ENCODE measurements at regions of chr3 and their contacts with region 1.

Region 1: DNA sequence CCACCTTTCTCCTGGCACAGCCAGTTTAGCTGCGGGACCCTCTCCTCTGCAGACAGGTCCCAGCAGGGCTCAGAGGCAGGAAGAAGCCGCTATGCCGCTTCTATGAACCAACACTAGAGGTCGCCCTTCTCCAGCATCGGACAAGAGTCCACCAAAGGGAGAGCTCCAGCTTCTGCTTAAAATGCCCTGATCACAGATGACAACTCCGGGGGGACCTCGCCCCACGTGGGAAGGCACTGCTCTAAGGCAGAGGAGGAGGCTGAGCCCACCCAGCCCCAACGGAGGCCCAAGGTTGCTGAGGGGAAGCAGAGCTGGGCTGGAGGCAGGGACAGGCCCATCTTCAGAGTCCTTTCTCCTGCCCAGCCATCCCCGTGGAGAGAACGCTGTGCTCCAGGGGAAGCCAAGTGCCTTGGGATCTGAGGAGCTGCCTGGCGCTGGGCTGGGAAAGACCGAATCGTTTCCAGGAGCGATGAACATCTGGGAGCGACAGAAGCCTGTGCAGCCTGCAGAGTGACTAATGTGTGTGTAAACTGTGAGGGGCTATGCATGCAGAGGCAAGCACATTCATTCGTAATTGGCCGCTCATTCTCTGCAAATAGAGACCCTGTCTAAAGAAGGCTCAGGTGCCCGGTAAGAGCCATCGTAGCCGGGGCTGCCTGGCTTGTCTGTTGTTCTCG is 43.5 kb upstream of the BDH1 start:
- H3K4me3 Mint-ChIP-seq: no peak overlapping the region
- H3K27ac Mint-ChIP-seq: no peak overlapping the region
- H3K4me1 Mint-ChIP-seq: peaks cover 10% of the 10 kb centered on the region
- H3K27me3 Mint-ChIP-seq: peaks cover 2% of the 10 kb centered on the region

Region 2: GRCh38 chr3:197428117-197428801 is 171.0 kb before region 1 on chr3:
- intact Hi-C with region 1: no loop called
- H3K4me3 Mint-ChIP-seq: no peak overlapping the region
- H3K27ac Mint-ChIP-seq: no peak overlapping the region
- H3K4me1 Mint-ChIP-seq: peaks cover 14% of the 10 kb centered on the region
- H3K27me3 Mint-ChIP-seq: peaks cover 48% of the 10 kb centered on the region

Region 3: DNA sequence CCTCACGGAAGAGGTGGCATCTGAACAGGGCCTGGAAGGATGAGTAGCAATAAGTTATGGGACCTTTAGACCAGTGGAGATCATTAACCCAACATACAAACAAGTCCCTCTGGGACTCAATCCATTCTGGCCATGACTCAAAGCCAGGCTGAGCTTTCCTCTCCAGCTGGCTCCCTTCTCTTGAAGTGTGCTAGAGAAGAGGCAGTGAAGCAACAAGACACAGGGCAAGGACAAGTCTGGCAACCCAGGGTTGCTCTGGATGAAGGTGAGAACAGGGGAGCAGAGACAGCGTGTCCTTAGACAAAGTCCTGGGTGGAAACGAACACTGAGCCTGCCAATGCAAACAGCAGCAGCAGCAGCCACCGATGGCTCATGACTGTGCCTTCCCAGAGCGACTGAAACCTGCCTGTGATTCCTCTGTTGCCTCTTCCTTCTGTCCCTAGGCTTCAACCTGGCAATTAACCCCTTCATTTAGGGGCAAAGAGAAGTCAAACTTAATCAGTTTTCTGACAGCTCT is 130.3 kb before region 1 on chr3:
- intact Hi-C with region 1: no loop called
- H3K4me3 Mint-ChIP-seq: no peak overlapping the region
- H3K27ac Mint-ChIP-seq: no peak overlapping the region
- H3K4me1 Mint-ChIP-seq: no peaks in the 10 kb centered on the region
- H3K27me3 Mint-ChIP-seq: peaks cover 43% of the 10 kb centered on the region

Region 4: GRCh38 chr3:197674741-197675562 is 75.7 kb after region 1 on chr3:
- intact Hi-C with region 1: loop called (anchors 5 kb)
- H3K4me3 Mint-ChIP-seq: no peak overlapping the region
- H3K27ac Mint-ChIP-seq: peak overlapping the region; percentile 40
- H3K4me1 Mint-ChIP-seq: peaks cover 44% of the 10 kb centered on the region
- H3K27me3 Mint-ChIP-seq: no peaks in the 10 kb centered on the region

Region 5: GRCh38 chr3:197874653-197875052 is 275.4 kb after region 1 on chr3:
- intact Hi-C with region 1: no loop called
- H3K4me3 Mint-ChIP-seq: no peak overlapping the region
- H3K27ac Mint-ChIP-seq: no peak overlapping the region
- H3K4me1 Mint-ChIP-seq: peaks cover 21% of the 10 kb centered on the region
- H3K27me3 Mint-ChIP-seq: no peaks in the 10 kb centered on the region

Measured in dendritic cell treated with granulocyte-macrophage colony-stimulating factor and Interleukin-4, amounts not matched to agents 40 ng/mL and 50 ng/mL, for 4 days (primary cell).